Sigmoid colon (tissue), 7 donors: ENCODE measurements at regions of chr22 and their contacts with region 1.

Region 1: DNA sequence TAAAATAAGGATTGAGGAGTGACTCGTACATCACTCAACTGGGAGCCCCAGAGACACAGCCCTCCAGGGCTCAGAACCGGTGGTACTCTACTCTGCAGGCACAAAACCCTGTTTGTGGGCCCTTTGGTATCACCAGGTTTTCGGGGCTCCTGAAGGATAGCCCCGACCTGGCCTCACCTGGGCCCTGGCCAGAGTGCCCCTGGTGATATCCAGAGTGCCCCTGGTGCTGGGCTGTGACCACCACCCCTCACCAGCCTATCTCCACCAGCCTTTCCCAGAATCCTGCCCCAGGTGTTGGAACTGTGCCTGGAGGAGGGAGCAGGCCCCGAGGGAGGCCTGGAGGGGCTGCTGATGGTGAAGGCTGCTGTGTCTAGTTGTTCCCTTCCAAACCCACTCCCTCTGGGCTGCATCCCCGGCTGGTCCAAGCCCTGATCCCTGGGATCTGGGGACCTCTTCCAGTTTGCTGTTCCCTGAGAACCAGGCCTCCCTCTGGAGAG is 2.2 kb upstream of the GGT5 start:
- DNase-seq: no peak
- H3K4me3 ChIP-seq: no peak overlapping the region
- H3K27ac ChIP-seq: peak overlapping the region; percentile 78 to 82 (median 78)
- H3K4me1 ChIP-seq: peaks cover 0 to 34% (median 31%) of the 10 kb centered on the region in 4 donors
- H3K27me3 ChIP-seq: no peaks in the 10 kb centered on the region
- CTCF ChIP-seq: no peak
- EP300 ChIP-seq: no peak
- POLR2A ChIP-seq: no peak

Region 2: DNA sequence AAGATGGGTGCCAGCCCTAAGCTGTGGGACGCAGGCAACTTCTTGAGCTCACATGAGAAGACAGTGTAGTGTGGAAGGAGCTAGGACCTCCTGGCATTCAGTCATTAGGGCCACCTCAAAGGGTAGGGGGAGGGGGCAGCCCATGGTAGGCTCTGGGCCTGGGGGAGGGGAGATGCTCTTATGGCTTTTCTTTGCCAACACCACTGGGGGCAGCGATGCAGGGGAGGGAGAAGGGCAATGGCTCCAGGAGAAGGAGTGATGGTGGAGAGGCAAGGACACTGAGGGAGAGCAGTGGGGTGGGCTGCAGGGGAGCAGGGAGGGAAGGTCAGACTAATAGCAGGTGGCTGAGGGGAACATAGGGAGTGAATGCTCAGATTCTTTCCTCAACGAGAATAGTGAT is 129.1 kb before region 1 on chr22:
- intact Hi-C with region 1: no loop called
- DNase-seq: no peak
- H3K4me3 ChIP-seq: no peak overlapping the region
- H3K27ac ChIP-seq: no peak overlapping the region
- H3K4me1 ChIP-seq: no peaks in the 10 kb centered on the region
- H3K27me3 ChIP-seq: no peaks in the 10 kb centered on the region
- CTCF ChIP-seq: no peak
- EP300 ChIP-seq: no peak
- POLR2A ChIP-seq: no peak

Region 3: GRCh38 chr22:24189249-24190158 is 57.6 kb before region 1 on chr22:
- intact Hi-C with region 1: loop called (anchors 2 kb)
- DNase-seq: peak; percentile 87
- H3K4me3 ChIP-seq: no peak overlapping the region
- H3K27ac ChIP-seq: no peak overlapping the region
- H3K4me1 ChIP-seq: peaks cover 0 to 13% (median 11%) of the 10 kb centered on the region in 4 donors
- H3K27me3 ChIP-seq: no peaks in the 10 kb centered on the region
- CTCF ChIP-seq: peak; percentile 83 to 91 (median 84)
- EP300 ChIP-seq: no peak
- POLR2A ChIP-seq: no peak